ENCODE measurements at regions of chr15 and their contacts with region 1.

Region 1: DNA sequence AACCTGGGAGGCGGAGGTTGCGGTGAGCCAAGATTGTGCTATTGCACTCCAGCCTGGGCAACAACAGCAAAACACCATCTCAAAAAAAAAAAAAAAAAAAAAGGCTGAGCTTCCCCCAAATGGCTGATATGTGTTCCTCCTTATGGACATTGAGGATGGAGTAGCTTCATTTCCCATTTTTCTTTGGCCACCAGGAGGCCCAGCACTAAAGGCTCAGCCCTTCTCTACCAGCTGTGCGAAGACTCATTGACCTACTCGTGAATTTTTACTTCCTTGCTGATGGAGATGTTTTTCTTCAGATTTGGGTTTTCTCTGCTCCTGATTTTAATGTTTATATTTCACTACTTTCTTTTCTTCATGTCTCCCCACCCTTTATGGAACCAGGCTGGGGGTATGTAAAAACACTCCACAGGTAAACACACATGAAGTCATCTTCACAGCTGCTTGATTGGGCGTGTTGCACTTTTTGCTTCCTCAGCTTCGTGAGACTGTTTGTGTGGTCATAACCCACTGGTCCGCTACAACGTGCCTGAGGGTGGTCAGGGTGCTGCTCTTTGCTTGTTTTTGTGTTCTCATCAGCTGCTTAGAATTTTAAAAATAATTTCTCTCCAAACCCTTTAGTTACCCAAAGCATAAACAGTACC is 13.5 kb downstream of the SEMA4B start:
- DNase-seq: peak; percentile 48
- ATAC-seq: no peak
- H3K4me3 ChIP-seq: no peak overlapping the region
- H3K27ac ChIP-seq: peak overlapping the region; percentile 2; the same call in 1 of the 2 replicates
- H3K4me1 ChIP-seq: peaks cover 41% of the 10 kb centered on the region
- H3K27me3 ChIP-seq: no peaks in the 10 kb centered on the region
- CTCF ChIP-seq: peak; percentile 49; the same call in 1 of the 2 replicates

Region 2: DNA sequence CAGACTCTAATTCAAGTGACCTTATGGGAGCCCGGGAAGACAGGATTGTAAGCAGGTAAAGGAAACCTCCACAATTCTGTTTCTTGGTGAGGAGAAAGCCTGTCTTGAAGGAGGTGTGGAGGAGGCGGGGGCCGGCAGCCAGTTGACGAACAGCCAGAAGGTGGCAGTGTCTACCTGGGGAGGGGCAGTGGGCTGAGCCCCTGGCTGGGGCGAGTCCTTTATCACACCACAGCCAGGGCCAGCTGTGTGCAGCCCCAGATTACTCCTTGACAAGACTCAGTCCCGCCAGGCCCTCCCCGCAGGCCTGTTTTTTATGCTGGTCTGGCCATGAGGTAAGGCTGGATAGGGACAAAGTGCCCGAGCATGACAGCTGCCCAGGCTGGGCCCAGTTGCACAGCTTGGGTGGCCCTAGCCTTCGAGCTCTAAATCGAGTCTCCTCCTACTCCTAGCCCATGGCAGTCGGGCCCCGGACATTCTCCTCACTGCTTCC is 71.5 kb before region 1 on chr15:
- CTCF ChIA-PET with region 1: no interaction called
- POLR2A ChIA-PET with region 1: interaction called, 19 read pairs
- intact Hi-C with region 1: no loop called
- DNase-seq: peak; percentile 79
- ATAC-seq: peak; percentile 95
- H3K4me3 ChIP-seq: no peak overlapping the region
- H3K27ac ChIP-seq: peak overlapping the region; percentile 4; the same call in 1 of the 2 replicates
- H3K4me1 ChIP-seq: peaks cover 13% of the 10 kb centered on the region
- H3K27me3 ChIP-seq: no peaks in the 10 kb centered on the region
- CTCF ChIP-seq: peak; percentile 94

Region 3: DNA sequence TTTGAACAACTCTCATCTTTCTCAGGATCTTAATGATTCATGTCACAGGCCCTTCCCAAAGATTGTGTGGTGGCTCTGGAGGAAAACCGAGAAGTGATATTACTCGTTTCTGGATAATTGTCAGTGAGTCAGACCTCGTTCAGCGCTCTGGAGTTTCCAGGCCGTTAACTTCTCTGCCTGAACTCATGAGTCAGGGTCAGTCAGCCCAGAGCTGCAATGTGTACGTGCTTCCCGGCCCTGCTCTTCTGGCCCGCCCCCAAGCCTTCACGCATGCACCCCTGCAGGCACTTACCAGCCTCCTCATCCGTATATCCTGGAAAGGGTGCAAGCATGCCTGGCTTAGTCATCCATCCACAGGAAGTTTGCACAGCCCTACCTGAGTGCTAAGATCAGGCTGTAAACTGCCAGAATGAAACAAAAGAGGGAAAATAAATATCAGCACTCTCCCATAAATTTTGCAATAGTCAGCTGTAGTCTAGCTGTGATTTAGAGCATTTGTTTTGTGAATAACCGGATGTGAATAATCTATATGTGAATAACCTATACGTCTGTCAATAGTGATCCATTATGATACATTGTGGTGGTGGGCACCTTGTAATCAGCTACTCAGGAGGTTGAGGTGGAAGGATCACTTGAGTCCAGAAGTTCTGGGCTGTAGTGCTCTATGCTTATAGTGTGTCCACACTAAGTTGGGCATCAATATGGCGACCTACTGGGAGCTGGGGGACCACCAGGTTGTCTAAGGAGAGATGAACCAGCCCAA is 48.8 kb before region 1 on chr15:
- CTCF ChIA-PET with region 1: no interaction called
- POLR2A ChIA-PET with region 1: interaction called, 26 read pairs
- intact Hi-C with region 1: no loop called
- DNase-seq: peak; percentile 99
- ATAC-seq: peak; percentile 91
- H3K4me3 ChIP-seq: no peak overlapping the region
- H3K27ac ChIP-seq: peak overlapping the region; percentile 100
- H3K4me1 ChIP-seq: peaks cover 52% of the 10 kb centered on the region
- H3K27me3 ChIP-seq: no peaks in the 10 kb centered on the region
- CTCF ChIP-seq: no peak

Region 4: DNA sequence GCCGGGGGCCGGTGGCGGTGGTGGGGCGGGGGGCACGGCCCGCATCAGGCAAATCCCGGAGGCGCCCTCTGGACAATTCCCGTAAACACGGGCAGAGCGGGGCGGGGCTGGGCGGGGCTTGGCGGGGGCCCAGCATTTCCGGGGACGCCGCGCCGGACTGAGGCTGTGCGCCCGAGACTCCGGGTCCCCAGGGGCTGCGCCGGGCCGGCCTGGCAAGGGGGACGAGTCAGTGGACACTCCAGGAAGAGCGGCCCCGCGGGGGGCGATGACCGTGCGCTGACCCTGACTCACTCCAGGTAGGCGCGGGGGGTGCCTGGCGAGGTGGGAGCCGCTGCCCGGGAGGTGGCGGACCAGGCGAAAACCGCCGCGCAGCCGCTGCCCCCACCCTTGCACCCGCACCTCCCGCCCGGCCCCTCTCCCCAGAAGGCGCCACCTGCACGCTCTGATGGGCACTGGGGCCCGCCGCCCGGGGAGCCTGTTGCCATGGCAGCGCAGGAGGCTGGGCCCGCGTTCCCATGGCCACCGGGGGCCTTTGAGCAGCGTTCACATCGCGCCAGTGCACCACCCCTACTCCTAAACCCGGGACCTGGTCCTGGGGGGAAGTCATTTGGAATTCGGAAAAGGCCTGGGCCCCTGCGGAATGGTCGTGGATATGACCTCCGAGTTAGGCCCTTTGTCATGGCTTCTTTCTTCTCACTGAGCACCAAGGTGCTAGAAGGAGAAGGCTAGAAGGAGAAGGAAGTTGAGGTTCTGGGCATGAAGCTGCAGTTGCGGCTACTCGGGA is 29.7 kb before region 1 on chr15:
- CTCF ChIA-PET with region 1: interaction called, 4 read pairs
- POLR2A ChIA-PET with region 1: interaction called, 29 read pairs
- intact Hi-C with region 1: no loop called
- DNase-seq: peak; percentile 65
- ATAC-seq: peak; percentile 69
- H3K4me3 ChIP-seq: peak overlapping the region; percentile 83
- H3K27ac ChIP-seq: peak overlapping the region; percentile 95
- H3K4me1 ChIP-seq: peaks cover 19% of the 10 kb centered on the region
- H3K27me3 ChIP-seq: no peaks in the 10 kb centered on the region
- CTCF ChIP-seq: no peak

Region 5: GRCh38 chr15:90249203-90249863 is 34.7 kb after region 1 on chr15 and contains the start of gene TTLL13:
- CTCF ChIA-PET with region 1: no interaction called
- POLR2A ChIA-PET with region 1: interaction called, 14 read pairs
- intact Hi-C with region 1: no loop called
- DNase-seq: peak; percentile 75
- ATAC-seq: peak; percentile 92
- H3K4me3 ChIP-seq: peak within 1 kb of the TSS; percentile 74
- H3K27ac ChIP-seq: no peak within 1 kb of the TSS
- H3K4me1 ChIP-seq: no peaks in the 10 kb centered on the region
- H3K27me3 ChIP-seq: no peaks in the 10 kb centered on the region
- CTCF ChIP-seq: no peak
- total RNA-seq, gene TTLL13: not detected in 2 replicates

Measured in PC-3 (cell line).